Prostate gland (tissue), 2 donors: ENCODE measurements at regions of chr19 and their contacts with region 1.

Region 1: GRCh38 chr19:43503501-43504425 is 783 bp downstream of the PHLDB3 start:
- DNase-seq: peak; percentile 99
- H3K4me3 ChIP-seq: peak overlapping the region; percentile 52 to 80
- H3K27ac ChIP-seq: peak overlapping the region; percentile 93 to 99
- H3K4me1 ChIP-seq: peaks cover 16% of the 10 kb centered on the region
- H3K27me3 ChIP-seq: no peaks in the 10 kb centered on the region
- CTCF ChIP-seq: peak; percentile 21 to 50 (median 42)
- POLR2A ChIP-seq: peak; percentile 90

Region 2: DNA sequence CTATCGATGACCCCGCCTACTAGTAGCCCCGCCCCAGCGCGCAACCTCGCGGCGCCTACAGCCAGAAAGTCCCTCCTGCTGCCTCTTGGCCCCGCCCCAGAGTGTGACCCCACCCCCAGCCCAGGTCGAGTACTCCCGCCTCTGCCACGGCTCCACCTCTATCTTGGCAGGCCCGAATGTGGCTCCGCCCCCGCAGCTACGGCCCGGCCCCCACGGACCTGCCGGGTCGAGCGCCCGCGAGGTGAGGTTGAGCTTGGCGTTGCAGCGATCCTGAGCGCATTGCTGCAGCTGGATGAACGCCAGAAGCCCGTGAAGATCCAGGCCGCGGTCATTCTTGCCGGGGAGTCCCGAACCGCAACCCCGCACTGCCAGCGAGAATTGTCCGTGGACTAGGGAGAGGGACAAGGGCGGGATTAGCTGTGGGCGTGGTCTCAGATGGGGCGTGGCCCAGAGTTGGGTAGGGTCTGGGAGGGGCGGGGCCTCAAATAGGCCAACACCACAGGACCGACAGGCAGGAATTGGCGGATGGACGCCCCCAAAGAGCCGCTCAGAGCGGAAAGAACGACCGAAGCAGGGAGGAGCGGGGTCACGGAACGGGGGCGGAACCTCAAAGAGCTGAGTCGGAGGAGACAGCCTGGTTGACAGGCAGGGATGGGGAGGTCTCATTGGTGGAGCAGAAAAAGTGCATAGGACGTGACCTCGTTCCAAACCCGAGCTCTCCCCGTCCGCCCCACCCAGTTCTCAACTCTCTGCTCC is 40.2 kb before region 1 on chr19:
- intact Hi-C with region 1: loop called (anchors 5 kb)
- DNase-seq: peak; percentile 99
- H3K4me3 ChIP-seq: peak overlapping the region; percentile 52 to 79
- H3K27ac ChIP-seq: peak overlapping the region; percentile 92 to 96
- H3K4me1 ChIP-seq: no peaks in the 10 kb centered on the region
- H3K27me3 ChIP-seq: no peaks in the 10 kb centered on the region
- CTCF ChIP-seq: peak in 1 of 4 experiments; percentile 12
- POLR2A ChIP-seq: peak; percentile 70

Region 3: DNA sequence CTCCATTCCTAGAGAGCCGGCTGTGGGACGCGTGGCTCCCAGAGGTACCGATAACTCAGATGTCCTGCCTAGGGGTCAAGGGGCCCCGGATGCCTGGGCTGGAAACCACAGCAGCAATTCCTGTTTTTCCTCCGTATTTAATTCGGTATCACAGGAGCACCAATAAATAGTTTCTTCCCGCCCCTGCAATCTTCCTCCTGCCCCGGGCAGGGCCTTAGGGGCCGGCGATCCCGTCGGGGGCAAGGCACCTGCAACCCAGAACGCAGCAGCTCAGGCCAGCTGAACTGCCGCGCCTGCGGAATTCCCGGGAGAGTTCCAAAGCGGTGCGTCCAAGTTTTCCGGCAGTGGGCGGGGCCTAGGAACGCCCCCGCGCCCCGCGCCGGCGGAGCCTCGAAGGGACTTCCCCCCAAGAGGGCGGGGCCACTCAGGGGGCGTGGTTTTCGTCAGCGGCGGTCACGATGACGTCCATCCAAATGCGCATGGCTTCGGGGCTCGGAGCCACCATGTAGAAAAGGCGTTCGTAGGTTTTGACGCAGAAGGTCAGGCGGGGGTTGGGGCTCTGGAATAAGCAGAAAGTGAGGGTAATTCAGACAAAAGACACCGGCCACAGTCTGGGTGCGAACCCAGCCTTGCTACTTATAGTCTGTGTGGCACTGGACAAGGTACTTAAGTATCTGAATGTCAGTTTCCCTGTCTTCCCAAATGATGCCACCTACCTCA is 28.6 kb before region 1 on chr19:
- intact Hi-C with region 1: no loop called
- DNase-seq: peak; percentile 92
- H3K4me3 ChIP-seq: peak overlapping the region in 1 of 2 donors; percentile 29
- H3K27ac ChIP-seq: peak overlapping the region; percentile 58 to 84
- H3K4me1 ChIP-seq: no peaks in the 10 kb centered on the region
- H3K27me3 ChIP-seq: no peaks in the 10 kb centered on the region
- CTCF ChIP-seq: no peak
- POLR2A ChIP-seq: peak; percentile 74

Region 4: GRCh38 chr19:43754503-43755255 is 250.9 kb after region 1 on chr19 and contains the start of gene SMG9:
- intact Hi-C with region 1: no loop called
- DNase-seq: peak; percentile 96
- H3K4me3 ChIP-seq: peak within 1 kb of the TSS; percentile 61 to 86
- H3K27ac ChIP-seq: peak within 1 kb of the TSS; percentile 95 to 99
- H3K4me1 ChIP-seq: no peaks in the 10 kb centered on the region
- H3K27me3 ChIP-seq: no peaks in the 10 kb centered on the region
- CTCF ChIP-seq: peak in 2 of 4 experiments; percentile 14 to 22
- POLR2A ChIP-seq: peak; percentile 77
- total RNA-seq, gene SMG9: 22.9 to 45.1 TPM